Caco-2 (cell line): ENCODE measurements at regions of chr13 and their contacts with region 1.

Region 1: GRCh38 chr13:38872693-38873092 is 117.9 kb downstream of the STOML3 start:
- DNase-seq: peak; percentile 67
- H3K4me3 ChIP-seq: no peak overlapping the region
- H3K4me3 Mint-ChIP-seq: no peak overlapping the region
- H3K27ac Mint-ChIP-seq: no peak overlapping the region
- H3K4me1 ChIP-seq: peaks cover 14% of the 10 kb centered on the region; the same call in 1 of the 2 replicates
- H3K4me1 Mint-ChIP-seq: peaks cover 12% of the 10 kb centered on the region
- H3K27me3 ChIP-seq: no peaks in the 10 kb centered on the region
- H3K27me3 Mint-ChIP-seq: no peaks in the 10 kb centered on the region
- CTCF ChIP-seq: peak; percentile 69 to 84

Region 2: GRCh38 chr13:38577048-38577447 is 295.6 kb before region 1 on chr13:
- CTCF ChIA-PET with region 1: no interaction called
- POLR2A ChIA-PET with region 1: no interaction called
- intact Hi-C with region 1: loop called (anchors 5 kb)
- DNase-seq: peak in 1 of 2 experiments; percentile 44
- H3K4me3 ChIP-seq: no peak overlapping the region
- H3K4me3 Mint-ChIP-seq: no peak overlapping the region
- H3K27ac Mint-ChIP-seq: no peak overlapping the region
- H3K4me1 ChIP-seq: no peaks in the 10 kb centered on the region
- H3K4me1 Mint-ChIP-seq: peaks cover 6% of the 10 kb centered on the region
- H3K27me3 ChIP-seq: no peaks in the 10 kb centered on the region
- H3K27me3 Mint-ChIP-seq: peaks cover 5% of the 10 kb centered on the region
- CTCF ChIP-seq: peak; percentile 17 to 22

Region 3: GRCh38 chr13:38670627-38671026 is 202.1 kb before region 1 on chr13:
- CTCF ChIA-PET with region 1: interaction called, 3 read pairs
- POLR2A ChIA-PET with region 1: no interaction called
- intact Hi-C with region 1: loop called (anchors 2 kb)
- DNase-seq: peak in 1 of 2 experiments; percentile 11
- H3K4me3 ChIP-seq: no peak overlapping the region
- H3K4me3 Mint-ChIP-seq: no peak overlapping the region
- H3K27ac Mint-ChIP-seq: no peak overlapping the region
- H3K4me1 ChIP-seq: peaks cover 12% of the 10 kb centered on the region
- H3K4me1 Mint-ChIP-seq: peaks cover 7% of the 10 kb centered on the region
- H3K27me3 ChIP-seq: no peaks in the 10 kb centered on the region
- H3K27me3 Mint-ChIP-seq: no peaks in the 10 kb centered on the region
- CTCF ChIP-seq: peak in 1 of 2 experiments; percentile 3

Region 4: GRCh38 chr13:38998739-38999138 is 126.0 kb after region 1 on chr13:
- CTCF ChIA-PET with region 1: no interaction called
- POLR2A ChIA-PET with region 1: no interaction called
- intact Hi-C with region 1: no loop called
- DNase-seq: no peak
- H3K4me3 ChIP-seq: no peak overlapping the region
- H3K4me3 Mint-ChIP-seq: no peak overlapping the region
- H3K27ac Mint-ChIP-seq: no peak overlapping the region
- H3K4me1 ChIP-seq: no peaks in the 10 kb centered on the region
- H3K4me1 Mint-ChIP-seq: no peaks in the 10 kb centered on the region
- H3K27me3 ChIP-seq: no peaks in the 10 kb centered on the region
- H3K27me3 Mint-ChIP-seq: no peaks in the 10 kb centered on the region
- CTCF ChIP-seq: no peak